Activated CD4-positive, alpha-beta T cell treated with anti-CD3 and anti-CD28 coated beads for 36 hours (primary cell): ENCODE measurements at regions of chr17 and their contacts with region 1.

Region 1: DNA sequence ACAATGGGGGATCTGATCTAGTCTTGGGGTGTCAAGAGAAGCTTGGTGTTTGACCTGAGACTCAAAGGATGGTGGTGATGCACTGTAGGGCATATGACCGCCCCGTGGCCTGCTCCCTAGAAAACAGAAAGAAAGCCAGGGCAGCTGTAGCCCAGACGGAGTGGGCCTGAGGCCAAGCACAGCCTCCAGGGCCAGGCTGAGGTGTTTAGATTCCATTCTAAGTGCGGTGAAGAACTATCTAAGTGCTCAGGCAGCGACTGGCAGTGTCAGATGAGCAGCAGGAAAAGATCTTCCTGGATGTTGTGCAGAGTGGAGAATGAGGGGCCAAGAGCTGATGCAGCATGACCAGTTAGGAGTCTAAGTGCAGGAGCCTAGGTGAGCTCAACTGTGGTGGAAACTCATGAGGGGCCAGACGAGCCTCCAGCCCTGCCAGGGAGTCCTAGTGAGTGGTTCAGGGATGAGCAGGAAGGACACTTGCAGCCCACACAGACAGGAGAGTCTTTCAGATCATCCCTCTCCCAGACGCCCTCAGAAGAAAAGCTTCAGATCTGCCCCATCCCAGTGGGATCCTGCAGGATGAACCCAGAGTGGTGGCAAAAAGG is 314.2 kb upstream of the CCL2 start:
- DNase-seq: no peak
- ATAC-seq: no peak
- H3K4me3 Mint-ChIP-seq: no peak overlapping the region
- H3K27ac Mint-ChIP-seq: no peak overlapping the region
- H3K4me1 Mint-ChIP-seq: no peaks in the 10 kb centered on the region
- H3K27me3 Mint-ChIP-seq: peaks cover 2% of the 10 kb centered on the region

Region 2: GRCh38 chr17:33990943-33991706 is 50.3 kb after region 1 on chr17:
- CTCF ChIA-PET with region 1: no interaction called
- POLR2A ChIA-PET with region 1: no interaction called
- intact Hi-C with region 1: loop called in 1 of 2 experiments (anchors 5 kb)
- DNase-seq: no peak
- ATAC-seq: no peak
- H3K4me3 Mint-ChIP-seq: no peak overlapping the region
- H3K27ac Mint-ChIP-seq: no peak overlapping the region
- H3K4me1 Mint-ChIP-seq: no peaks in the 10 kb centered on the region
- H3K27me3 Mint-ChIP-seq: peaks cover 8% of the 10 kb centered on the region